Pancreas (tissue), 10 donors: ENCODE measurements at regions of chr4 and their contacts with region 1.

Region 1: GRCh38 chr4:77235289-77235854 is 78.4 kb downstream of the CCNG2 start:
- DNase-seq: no peak
- ATAC-seq: no peak
- H3K4me3 ChIP-seq: no peak overlapping the region
- H3K27ac ChIP-seq: no peak overlapping the region
- H3K4me1 ChIP-seq: no peaks in the 10 kb centered on the region
- H3K27me3 ChIP-seq: no peaks in the 10 kb centered on the region
- CTCF ChIP-seq: no peak

Region 2: DNA sequence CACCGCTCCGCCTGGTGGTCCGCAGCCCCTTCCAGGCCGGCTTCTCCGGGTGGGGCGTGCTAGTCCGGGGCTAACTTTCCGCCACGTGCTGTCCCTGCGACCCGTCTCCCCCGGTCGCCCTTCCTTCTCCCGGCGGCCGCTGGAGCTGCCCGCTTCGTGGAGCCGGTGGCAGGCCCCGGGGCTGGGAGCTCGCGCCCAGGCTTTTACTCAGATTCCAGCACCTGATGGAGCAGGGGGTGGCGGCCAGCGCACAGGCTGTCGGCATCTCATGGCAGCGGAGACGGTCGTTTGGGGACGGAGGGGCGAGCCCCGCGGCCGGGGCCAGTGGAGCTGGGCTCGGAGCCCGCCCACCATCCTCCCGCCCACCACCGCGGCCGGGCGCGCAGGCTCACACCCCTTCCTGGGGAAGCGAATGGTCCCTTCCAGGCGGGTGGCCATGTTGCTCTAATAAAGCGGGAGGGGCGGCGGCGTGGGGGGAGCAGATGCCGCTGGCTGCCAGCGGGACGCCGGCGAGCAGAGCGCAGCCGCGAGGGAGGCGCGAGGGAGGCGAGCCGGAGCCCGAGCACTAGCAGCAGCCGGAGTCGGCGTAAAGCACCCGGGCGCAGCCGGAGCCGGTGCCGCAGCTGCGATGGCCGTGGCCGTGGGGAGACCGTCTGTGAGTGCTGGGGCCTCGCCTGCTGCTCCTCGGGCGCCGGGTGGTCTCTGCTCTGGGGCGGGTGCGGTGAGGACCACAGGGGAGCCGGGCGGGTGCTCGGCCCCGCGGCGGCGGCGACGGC is 285.9 kb before region 1 on chr4 and contains the start of gene SEPTIN11:
- intact Hi-C with region 1: no loop called
- DNase-seq: peak; percentile 91 to 96 (median 93)
- ATAC-seq: peak; percentile 83 to 91 (median 90)
- H3K4me3 ChIP-seq: peak within 1 kb of the TSS; percentile 66 to 92 (median 82)
- H3K27ac ChIP-seq: peak within 1 kb of the TSS; percentile 83 to 90 (median 86)
- H3K4me1 ChIP-seq: peaks cover 0 to 9% (median 0%) of the 10 kb centered on the region in 3 donors
- H3K27me3 ChIP-seq: no peaks in the 10 kb centered on the region
- CTCF ChIP-seq: no peak
- total RNA-seq, gene SEPTIN11: 18.6 to 48.9 (median 28.9) TPM

Region 3: GRCh38 chr4:77052352-77052751 is 183.0 kb before region 1 on chr4:
- intact Hi-C with region 1: no loop called
- DNase-seq: peak in 5 of 6 donors; percentile 31 to 81 (median 57)
- ATAC-seq: peak; percentile 42 to 81 (median 70)
- H3K4me3 ChIP-seq: no peak overlapping the region
- H3K27ac ChIP-seq: no peak overlapping the region
- H3K4me1 ChIP-seq: no peaks in the 10 kb centered on the region
- H3K27me3 ChIP-seq: no peaks in the 10 kb centered on the region
- CTCF ChIP-seq: peak in 3 of 4 donors; percentile 11 to 32 (median 25)

Region 4: DNA sequence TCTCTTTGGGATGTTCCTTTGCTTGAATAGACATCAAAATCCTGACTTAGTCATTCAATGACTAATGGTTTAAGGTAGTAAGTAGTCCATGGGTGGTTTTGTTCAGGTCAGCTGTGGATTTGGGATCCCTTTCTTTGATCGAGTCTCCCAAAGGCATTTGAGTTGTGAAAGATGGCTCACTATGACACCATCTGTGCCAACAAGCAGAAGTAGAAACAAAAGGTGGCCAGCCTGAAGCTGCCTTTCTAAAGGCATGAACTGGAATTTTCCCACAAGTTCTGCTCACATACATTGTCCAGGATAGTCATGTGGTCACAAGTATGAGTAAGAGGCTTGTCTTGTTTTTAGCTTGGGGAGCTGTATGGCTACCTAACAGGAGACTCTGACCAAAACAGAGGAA is 51.5 kb after region 1 on chr4:
- intact Hi-C with region 1: no loop called
- DNase-seq: no peak
- ATAC-seq: no peak
- H3K4me3 ChIP-seq: no peak overlapping the region
- H3K27ac ChIP-seq: no peak overlapping the region
- H3K4me1 ChIP-seq: no peaks in the 10 kb centered on the region
- H3K27me3 ChIP-seq: no peaks in the 10 kb centered on the region
- CTCF ChIP-seq: no peak

Region 5: GRCh38 chr4:77358315-77358928 is 123.0 kb after region 1 on chr4:
- intact Hi-C with region 1: loop called in 2 of 3 experiments (anchors 5 kb)
- DNase-seq: peak in 2 of 6 donors; percentile 6 to 29
- ATAC-seq: peak; percentile 81 to 89 (median 86)
- H3K4me3 ChIP-seq: no peak overlapping the region
- H3K27ac ChIP-seq: no peak overlapping the region
- H3K4me1 ChIP-seq: no peaks in the 10 kb centered on the region
- H3K27me3 ChIP-seq: no peaks in the 10 kb centered on the region
- CTCF ChIP-seq: peak in 3 of 4 donors; percentile 43 to 48 (median 46)